Posterior cingulate gyrus (tissue), 11 donors: ENCODE measurements at regions of chr1 and their contacts with region 1.

Region 1: DNA sequence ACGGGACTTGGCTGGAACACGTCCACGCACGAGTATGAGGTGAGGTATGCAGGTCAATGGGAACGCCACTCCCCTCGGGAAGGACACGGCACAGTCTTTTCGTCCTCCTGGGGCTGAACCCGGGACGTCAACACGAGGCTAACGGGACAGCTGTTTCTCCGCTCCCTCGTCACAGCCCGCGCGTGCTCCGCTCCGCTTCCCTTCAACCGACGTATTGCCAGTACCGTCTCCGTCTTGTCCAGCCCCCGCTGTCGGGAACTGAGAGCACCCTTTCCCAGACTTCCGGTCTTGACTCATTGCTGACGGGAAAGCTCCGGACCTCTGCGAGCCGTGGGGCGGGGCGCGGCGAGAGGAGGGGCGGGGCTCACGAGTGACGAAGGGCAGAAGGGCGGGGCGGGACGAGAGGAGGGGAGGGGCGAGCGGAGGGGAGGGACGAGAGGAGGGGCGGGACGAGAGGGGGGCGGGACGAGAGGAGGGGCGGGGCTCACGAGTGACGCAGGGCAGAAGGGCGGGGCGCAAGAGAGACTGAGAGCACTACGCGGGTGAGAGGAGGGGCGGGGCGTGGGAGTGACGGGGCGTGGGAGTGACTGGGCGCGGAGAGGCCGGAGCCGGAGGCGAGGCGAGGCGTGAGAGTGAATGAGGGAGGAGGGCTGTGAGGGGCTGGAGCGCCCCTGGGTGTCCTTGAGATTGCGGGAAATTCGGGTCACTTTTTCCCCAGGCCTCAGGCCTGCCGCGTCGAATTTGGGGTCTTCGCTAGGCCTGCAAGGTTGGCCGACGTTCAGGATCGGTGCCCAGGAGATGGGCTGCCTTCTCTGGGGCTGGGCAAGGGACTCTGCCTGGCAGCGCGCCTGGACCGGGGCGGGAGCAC is 22.2 kb upstream of the CFAP126 start:
- DNase-seq: peak; percentile 94 to 100 (median 97)

Region 2: DNA sequence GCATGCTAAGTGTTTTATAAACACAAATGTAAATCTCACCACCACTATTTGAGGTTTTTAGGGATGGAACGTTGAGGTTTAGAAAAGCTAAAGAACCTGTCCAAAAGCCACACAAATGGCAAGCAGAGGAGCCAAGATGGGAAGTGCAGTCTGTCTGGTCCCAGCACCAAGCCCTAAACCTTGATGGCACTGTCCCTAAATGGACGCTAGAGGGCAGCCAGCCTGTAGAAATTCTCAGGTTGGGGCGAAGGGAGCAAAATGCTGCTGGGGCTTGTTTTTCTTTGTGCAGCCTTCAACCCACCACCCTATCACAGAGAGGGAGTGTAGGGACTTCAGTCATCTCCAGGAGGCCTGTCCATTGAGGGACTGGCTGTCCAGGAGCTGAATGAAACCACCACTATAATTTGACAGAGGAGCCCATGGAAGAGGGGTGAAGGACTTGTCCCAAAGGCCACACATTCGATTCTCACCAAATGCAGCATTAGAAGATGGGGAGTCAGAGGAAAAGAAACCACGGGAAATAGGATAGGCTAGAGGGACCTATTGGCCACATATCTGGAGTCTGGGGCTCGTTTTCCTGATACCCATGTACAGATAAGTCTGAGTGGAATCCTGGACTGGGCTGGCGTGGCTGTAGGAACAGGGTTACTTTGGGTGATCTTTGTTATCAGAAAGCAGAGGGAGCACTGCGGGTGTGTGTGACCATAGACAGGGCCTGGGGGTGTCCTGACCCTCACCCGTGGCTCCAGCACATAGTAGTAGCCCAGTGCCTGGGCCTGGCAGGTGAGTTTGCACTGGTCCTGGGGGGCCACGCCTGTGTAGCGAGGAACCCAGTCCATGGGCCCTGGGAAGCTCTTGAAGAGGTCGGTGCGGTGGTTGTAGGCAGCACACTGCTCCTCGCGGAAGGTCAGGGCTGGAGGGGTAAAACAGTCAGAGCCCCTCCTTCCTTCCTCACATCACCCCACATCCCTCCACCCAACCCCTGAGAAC is 197.2 kb before region 1 on chr1:
- intact Hi-C with region 1: loop called (anchors 10 kb)
- DNase-seq: peak in 6 of 10 donors; percentile 67 to 94 (median 74)

Region 3: DNA sequence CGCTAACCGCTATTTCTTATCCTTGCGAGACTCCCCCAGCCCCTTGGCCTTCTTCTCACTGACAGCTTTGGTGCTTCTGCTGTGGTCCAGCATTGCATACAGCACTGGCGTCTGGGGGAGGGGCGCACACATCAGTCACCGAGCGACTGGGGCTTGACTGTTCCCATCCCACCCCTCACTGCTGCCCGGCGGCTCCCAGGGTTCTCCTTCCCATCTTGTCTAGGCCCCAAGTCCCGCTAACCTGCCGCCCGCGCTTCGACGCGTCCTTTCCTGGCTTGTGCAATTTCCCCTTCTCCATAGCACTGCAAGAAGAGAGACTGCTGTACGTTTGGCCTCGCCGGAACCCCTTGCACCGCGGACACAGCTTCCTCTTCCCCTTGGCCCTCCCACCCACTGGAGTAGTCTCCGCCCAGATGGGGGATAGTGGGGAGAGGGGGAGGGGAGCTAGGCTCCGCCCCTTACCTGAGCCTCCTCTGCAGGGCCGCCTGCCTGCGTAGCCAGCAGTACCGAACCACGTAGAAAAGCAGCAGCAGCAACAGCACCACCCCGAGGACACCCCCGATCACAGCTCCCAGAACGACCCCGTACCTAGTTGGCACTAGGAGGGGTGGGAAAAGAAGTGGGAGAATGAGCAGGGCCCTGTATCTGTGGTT is 83.9 kb before region 1 on chr1:
- intact Hi-C with region 1: no loop called
- DNase-seq: peak; percentile 57 to 97 (median 80)

Region 4: DNA sequence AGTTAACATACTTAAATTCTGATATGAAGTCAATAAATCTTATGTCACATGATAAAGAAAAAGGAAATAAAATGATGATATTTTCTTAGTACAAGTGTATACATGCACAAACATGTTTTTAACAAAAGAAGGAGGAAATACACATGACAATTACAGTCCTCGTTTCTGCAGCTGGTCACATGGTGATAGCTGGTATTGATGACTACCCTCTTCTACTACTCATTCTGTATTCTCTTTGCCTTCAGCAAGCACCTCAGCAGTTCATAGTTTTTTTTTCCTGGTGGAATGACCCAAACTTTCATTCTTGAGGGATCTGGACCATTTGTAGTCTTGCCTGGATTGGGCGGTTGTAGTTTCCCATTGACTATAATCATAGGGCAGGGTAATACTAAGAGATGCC is 42.2 kb after region 1 on chr1:
- intact Hi-C with region 1: no loop called
- DNase-seq: no peak

Region 5: GRCh38 chr1:161739865-161740566 is 350.1 kb after region 1 on chr1:
- intact Hi-C with region 1: loop called (anchors 5 kb)
- DNase-seq: no peak